Endothelial cell of umbilical vein (primary cell): ENCODE measurements at regions of chr10 and their contacts with region 1.

Region 1: DNA sequence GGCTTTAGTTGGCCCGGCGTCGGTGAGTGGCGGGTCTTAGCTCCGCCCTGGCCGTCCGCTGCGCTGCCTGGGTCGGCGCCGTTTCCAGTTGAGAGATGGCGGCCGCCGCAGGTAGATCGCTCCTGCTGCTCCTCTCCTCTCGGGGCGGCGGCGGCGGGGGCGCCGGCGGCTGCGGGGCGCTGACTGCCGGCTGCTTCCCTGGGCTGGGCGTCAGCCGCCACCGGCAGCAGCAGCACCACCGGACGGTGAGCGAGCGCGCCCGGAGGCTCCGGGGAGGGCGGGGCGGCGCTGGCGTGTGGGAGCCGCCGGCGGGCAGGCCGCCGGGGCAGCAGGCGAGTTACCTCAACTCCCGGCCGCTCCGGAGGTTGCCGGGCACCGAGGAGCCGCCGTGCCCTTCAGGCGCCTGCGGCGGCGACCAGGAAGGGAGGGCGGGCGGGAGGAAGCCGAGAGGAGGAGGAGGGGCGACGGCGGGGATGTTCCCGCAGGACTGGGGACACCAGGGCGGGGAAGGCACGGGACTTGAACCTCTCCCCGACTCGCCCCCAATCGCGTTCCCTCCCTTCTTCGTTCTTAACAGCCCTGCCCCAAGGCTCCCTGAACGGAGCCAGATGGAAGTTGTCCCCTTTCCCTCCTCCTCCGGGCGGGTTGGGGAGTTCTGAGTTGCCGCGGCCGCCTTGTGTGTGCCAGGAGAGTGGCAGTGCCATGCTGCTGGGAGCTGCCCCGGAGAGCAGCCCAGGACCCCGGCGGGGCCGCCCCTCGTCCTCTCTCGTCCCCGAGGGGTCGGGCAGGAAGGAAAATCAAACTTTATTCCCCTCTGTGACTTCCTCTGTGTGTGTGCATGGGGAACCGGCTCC is at the start of gene MCU:
- DNase-seq: peak; percentile 96
- H3K4me3 ChIP-seq: peak within 1 kb of the TSS; percentile 74 to 98 (median 79)
- H3K27ac ChIP-seq: peak within 1 kb of the TSS; percentile 58
- H3K4me1 ChIP-seq: peaks cover 28% of the 10 kb centered on the region
- H3K27me3 ChIP-seq: no peaks in the 10 kb centered on the region
- CTCF ChIP-seq: no peak
- POLR2A ChIP-seq: peak; percentile 78
- total RNA-seq, gene MCU: 25.2 and 26.1 TPM in 2 replicates

Region 2: DNA sequence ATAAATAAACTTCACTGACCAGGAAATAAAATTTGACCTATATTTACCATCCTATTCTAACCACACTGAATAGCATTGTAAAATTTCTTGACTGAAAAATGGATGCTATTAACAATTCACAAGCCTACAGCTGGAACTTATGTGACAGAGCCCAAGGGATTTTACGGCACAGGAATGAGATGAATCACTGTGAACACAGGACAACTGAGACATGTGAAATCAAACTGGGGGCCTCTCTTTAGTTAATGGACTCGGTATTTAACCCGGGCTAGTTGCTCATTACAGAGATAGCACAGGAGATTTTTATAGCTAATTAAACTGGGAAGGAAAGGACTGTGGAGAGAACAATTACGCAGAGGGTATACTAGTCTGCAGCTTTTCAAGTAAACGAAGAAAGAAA is 167.0 kb before region 1 on chr10:
- CTCF ChIA-PET with region 1: no interaction called
- POLR2A ChIA-PET with region 1: no interaction called
- dilution Hi-C with region 1: loop called (anchors 10 kb)
- intact Hi-C with region 1: no loop called
- DNase-seq: no peak
- H3K4me3 ChIP-seq: no peak overlapping the region
- H3K27ac ChIP-seq: no peak overlapping the region
- H3K4me1 ChIP-seq: no peaks in the 10 kb centered on the region
- H3K27me3 ChIP-seq: no peaks in the 10 kb centered on the region
- CTCF ChIP-seq: no peak
- POLR2A ChIP-seq: no peak

Region 3: DNA sequence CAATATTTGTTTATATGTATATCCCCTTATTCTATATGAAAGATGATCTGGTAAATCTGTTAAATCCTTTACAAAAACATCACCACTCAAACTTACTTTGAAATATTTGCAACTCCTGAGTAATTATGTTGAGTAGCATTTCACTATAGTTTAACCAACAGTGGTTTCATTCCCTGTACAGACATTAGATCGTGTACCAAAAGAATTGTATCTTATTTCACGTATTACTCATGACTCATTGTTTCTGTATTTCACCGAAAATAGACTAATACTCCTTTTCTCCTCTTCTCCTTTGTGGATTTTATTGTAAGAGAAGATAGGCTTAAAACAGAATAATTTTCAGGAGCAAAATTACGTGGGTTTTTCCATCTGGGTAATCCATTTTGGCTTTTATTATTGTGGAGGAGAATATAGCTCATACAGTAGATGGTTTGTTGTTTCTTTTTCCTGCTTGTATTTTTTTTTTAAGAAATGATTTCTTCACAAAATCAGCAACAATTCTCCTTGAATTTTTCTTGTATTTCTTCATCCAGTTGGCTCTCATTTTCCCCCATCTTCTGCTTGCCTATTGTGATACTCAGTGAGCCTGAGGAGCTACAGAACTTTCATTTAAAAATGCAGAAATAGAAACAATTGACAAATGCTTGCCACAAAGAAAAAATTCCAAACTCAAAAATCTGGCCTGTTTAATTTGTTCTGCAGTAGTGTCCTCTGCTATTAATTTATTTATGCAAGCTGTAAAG is 110.7 kb after region 1 on chr10:
- CTCF ChIA-PET with region 1: interaction called, 3 read pairs
- POLR2A ChIA-PET with region 1: no interaction called
- dilution Hi-C with region 1: no loop called
- intact Hi-C with region 1: loop called (anchors 1 kb)
- DNase-seq: peak; percentile 74
- H3K4me3 ChIP-seq: peak overlapping the region in 1 of 3 experiments; percentile 38
- H3K27ac ChIP-seq: peak overlapping the region; percentile 48
- H3K4me1 ChIP-seq: peaks cover 34% of the 10 kb centered on the region
- H3K27me3 ChIP-seq: no peaks in the 10 kb centered on the region
- CTCF ChIP-seq: no peak
- POLR2A ChIP-seq: no peak

Region 4: GRCh38 chr10:72889391-72889831 is 197.1 kb after region 1 on chr10:
- CTCF ChIA-PET with region 1: no interaction called
- POLR2A ChIA-PET with region 1: no interaction called
- dilution Hi-C with region 1: no loop called
- intact Hi-C with region 1: loop called (anchors 5 kb)
- DNase-seq: peak; percentile 12
- H3K4me3 ChIP-seq: no peak overlapping the region
- H3K27ac ChIP-seq: no peak overlapping the region
- H3K4me1 ChIP-seq: peaks cover 23% of the 10 kb centered on the region
- H3K27me3 ChIP-seq: no peaks in the 10 kb centered on the region
- CTCF ChIP-seq: no peak
- POLR2A ChIP-seq: no peak